Left lung (tissue), 14 donors: ENCODE measurements at regions of chr10 and their contacts with region 1.

Region 1: GRCh38 chr10:62594093-62594520 is 210.4 kb upstream of the ADO start:
- DNase-seq: peak; percentile 36 to 85 (median 64)
- ATAC-seq: peak; percentile 94
- H3K4me3 ChIP-seq: no peak overlapping the region
- H3K27ac ChIP-seq: no peak overlapping the region
- H3K4me1 ChIP-seq: no peaks in the 10 kb centered on the region
- H3K27me3 ChIP-seq: peaks cover 10 to 12% of the 10 kb centered on the region in 2 donors
- CTCF ChIP-seq: peak; percentile 82 to 85

Region 2: GRCh38 chr10:62540389-62540788 is 53.7 kb before region 1 on chr10:
- intact Hi-C with region 1: no loop called
- DNase-seq: no peak
- ATAC-seq: peak; percentile 17
- H3K4me3 ChIP-seq: no peak overlapping the region
- H3K27ac ChIP-seq: peak overlapping the region; percentile 20 to 43
- H3K4me1 ChIP-seq: peaks cover 0 to 5% of the 10 kb centered on the region in 2 donors
- H3K27me3 ChIP-seq: no peaks in the 10 kb centered on the region
- CTCF ChIP-seq: no peak

Region 3: GRCh38 chr10:62655337-62655994 is 61.4 kb after region 1 on chr10:
- intact Hi-C with region 1: no loop called
- DNase-seq: no peak
- ATAC-seq: no peak
- H3K4me3 ChIP-seq: no peak overlapping the region
- H3K27ac ChIP-seq: no peak overlapping the region
- H3K4me1 ChIP-seq: no peaks in the 10 kb centered on the region
- H3K27me3 ChIP-seq: no peaks in the 10 kb centered on the region
- CTCF ChIP-seq: no peak

Region 4: GRCh38 chr10:62816331-62817120 is 222.4 kb after region 1 on chr10 and contains the start of gene EGR2:
- intact Hi-C with region 1: loop called in 1 of 2 experiments (anchors 10 kb)
- DNase-seq: peak; percentile 93 to 96 (median 95)
- ATAC-seq: peak; percentile 85
- H3K4me3 ChIP-seq: peak within 1 kb of the TSS; percentile 53 to 61
- H3K27ac ChIP-seq: peak within 1 kb of the TSS; percentile 83 to 88
- H3K4me1 ChIP-seq: peaks cover 18 to 44% of the 10 kb centered on the region in 2 donors
- H3K27me3 ChIP-seq: peaks cover 34 to 70% of the 10 kb centered on the region in 2 donors
- CTCF ChIP-seq: no peak
- polyA plus RNA-seq, gene EGR2: 0.76 to 9.0 (median 3.5) TPM